Ascending aorta (tissue), 2 donors: ENCODE measurements at regions of chr7 and their contacts with region 1.

Region 1: GRCh38 chr7:2863461-2864066 is 19.5 kb upstream of the GNA12 start:
- DNase-seq: peak; percentile 76 to 95
- H3K4me3 ChIP-seq: peak overlapping the region in 1 of 2 donors; percentile 50
- H3K27ac ChIP-seq: peak overlapping the region; percentile 89 to 98
- H3K4me1 ChIP-seq: peaks cover 15 to 29% of the 10 kb centered on the region in 2 donors
- H3K27me3 ChIP-seq: no peaks in the 10 kb centered on the region
- CTCF ChIP-seq: no peak

Region 2: DNA sequence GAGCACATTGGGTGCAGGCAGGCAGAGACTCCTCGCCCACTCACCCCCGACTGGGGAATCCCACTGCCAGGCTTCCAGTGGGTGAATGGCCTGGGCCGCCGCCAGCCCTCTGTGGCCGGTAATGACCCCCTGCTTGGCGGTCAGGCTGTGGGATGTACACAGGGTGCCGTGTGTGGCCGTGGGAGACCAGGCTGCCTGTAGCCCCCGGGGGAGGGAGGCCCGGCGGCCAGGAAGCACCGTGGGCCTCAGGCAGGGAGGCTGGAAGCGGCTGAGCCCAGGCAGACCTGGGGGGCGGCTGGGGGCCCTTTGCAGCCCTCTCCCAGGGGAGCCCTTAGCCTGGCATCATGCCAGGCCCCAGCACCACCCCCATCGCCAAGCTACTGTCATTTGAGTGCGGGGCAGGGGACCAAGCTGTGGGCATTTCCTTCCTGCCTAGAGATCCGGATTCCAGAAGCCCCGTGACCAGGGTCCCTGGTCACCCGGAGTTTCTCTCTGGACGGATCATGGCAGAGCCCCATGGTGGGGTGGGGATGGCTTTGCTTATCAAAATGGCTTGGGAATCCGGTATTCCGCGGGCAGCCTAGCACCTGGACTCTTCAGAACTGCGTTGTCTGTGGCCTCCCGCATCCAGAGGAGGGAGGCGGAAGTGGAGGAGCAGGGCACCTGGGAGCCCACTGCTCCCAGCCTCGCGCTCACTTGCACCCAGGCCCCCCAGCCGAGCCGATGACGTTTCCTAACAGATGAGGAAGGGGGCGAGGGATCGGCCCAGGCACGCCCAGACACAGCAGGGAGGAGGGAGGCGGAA is 230.6 kb before region 1 on chr7:
- intact Hi-C with region 1: loop called (anchors 5 kb)
- DNase-seq: peak; percentile 54 to 84
- H3K4me3 ChIP-seq: peak overlapping the region; percentile 76 to 85
- H3K27ac ChIP-seq: peak overlapping the region; percentile 80 to 87
- H3K4me1 ChIP-seq: peaks cover 20 to 36% of the 10 kb centered on the region in 2 donors
- H3K27me3 ChIP-seq: no peaks in the 10 kb centered on the region
- CTCF ChIP-seq: no peak

Region 3: GRCh38 chr7:2688409-2689331 is 174.9 kb before region 1 on chr7:
- intact Hi-C with region 1: no loop called
- DNase-seq: no peak
- H3K4me3 ChIP-seq: peak overlapping the region; percentile 41 to 62
- H3K27ac ChIP-seq: no peak overlapping the region
- H3K4me1 ChIP-seq: peaks cover 4 to 27% of the 10 kb centered on the region in 2 donors
- H3K27me3 ChIP-seq: no peaks in the 10 kb centered on the region
- CTCF ChIP-seq: no peak

Region 4: DNA sequence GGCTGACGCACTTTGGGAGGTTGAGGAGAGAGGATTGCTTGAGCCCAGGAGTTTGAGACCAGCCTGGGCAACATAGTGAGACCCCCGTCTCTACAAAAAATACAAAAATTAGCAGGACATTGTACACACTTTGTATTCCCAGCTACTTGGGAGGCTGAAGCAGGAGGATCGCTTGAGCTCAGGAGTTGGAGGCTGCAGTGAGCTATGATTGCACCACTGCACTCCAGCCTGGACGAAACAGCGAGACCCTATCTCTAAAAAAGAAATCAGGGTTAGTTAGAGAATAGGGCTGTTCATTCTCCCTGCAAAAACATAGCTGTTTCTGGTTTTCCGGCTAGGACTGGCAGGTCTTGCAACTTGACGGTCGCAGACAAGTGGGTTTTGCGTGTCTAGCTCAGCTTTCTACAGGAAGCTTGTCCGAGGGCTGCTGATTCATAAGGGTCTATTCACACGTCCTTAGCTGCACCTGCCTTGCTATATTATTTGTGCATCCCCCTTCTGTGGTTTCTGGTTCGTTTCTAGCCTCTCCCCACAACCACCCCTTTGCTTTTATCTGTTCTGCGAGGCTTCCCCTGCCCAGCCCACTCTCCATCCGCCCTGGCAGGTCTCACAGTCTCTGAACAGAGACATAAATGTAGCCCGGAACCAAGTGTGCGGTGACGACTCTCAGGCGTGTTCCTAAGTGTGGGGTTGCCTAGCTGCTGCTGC is 164.8 kb before region 1 on chr7:
- intact Hi-C with region 1: no loop called
- DNase-seq: no peak
- H3K4me3 ChIP-seq: no peak overlapping the region
- H3K27ac ChIP-seq: no peak overlapping the region
- H3K4me1 ChIP-seq: peaks cover 0 to 3% of the 10 kb centered on the region in 2 donors
- H3K27me3 ChIP-seq: no peaks in the 10 kb centered on the region
- CTCF ChIP-seq: no peak

Region 5: DNA sequence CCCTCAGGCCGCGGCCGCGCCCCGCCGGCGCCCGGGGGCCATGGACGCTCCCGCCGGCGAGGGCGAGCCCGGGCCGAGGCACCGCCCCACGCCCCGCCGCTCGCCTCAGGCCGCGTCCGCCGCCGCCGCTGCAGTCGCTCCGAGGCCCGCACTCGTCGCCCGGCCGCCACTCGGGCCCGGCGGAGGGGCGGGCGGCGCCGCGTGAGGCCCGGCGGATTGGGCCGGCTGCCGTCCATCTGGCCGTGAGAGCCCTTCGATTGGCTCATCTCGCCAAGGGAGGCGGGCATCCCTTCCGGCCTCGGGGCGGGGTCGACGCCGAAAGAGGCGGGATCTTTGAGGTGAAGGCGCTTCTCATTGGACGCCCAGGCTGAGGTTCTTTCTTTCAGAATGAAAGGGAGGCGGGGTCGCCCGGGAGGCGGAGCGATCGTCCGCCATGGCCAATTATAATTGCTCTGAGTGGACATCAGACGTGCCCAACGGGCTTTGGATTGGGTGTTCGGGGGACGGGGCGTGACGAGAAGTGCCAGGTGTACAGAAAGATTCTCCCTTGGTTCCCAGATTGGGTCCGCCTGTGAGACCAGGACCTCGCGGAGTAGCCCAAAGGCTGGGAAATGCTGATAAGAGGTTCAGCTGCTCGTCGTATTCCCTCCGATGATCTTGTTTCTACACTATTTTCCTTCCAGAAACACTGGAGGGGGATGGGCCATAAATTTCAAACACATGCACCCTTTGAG is 19.2 kb before region 1 on chr7 and contains the start of gene GNA12:
- intact Hi-C with region 1: loop called (anchors 1 kb)
- DNase-seq: peak; percentile 97 to 100
- H3K4me3 ChIP-seq: peak within 1 kb of the TSS; percentile 90 to 94
- H3K27ac ChIP-seq: peak within 1 kb of the TSS; percentile 57 to 62
- H3K4me1 ChIP-seq: peaks cover 9 to 18% of the 10 kb centered on the region in 2 donors
- H3K27me3 ChIP-seq: no peaks in the 10 kb centered on the region
- CTCF ChIP-seq: no peak
- total RNA-seq, gene GNA12: 61.0 TPM

Region 6: DNA sequence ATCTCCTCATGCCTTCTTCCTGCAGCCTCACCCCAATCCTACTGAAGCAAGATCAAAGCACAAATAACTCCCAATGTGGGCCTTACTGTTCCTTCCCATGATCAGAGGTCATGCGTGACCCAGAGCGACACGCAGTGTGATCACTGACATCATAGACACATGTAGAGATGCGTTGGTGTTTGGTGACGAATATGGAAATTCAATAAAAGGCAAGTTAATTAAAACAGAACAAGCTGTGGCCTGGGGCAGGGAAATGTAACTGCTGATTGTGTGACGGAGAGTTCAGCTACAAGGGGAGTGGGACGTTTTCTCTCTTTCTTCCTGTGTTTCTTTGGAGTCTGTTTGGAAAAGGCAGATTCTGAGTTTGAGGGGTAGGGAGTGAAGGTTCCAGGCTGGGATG is 214.9 kb after region 1 on chr7:
- intact Hi-C with region 1: no loop called
- DNase-seq: no peak
- H3K4me3 ChIP-seq: no peak overlapping the region
- H3K27ac ChIP-seq: no peak overlapping the region
- H3K4me1 ChIP-seq: peaks cover 0 to 2% of the 10 kb centered on the region in 2 donors
- H3K27me3 ChIP-seq: no peaks in the 10 kb centered on the region
- CTCF ChIP-seq: no peak

Region 7: GRCh38 chr7:3300651-3301378 is 437.3 kb after region 1 on chr7 and contains the start of gene SDK1:
- intact Hi-C with region 1: loop called (anchors 5 kb)
- DNase-seq: peak; percentile 61 to 96
- H3K4me3 ChIP-seq: peak within 1 kb of the TSS; percentile 73 to 78
- H3K27ac ChIP-seq: peak within 1 kb of the TSS; percentile 64 to 79
- H3K4me1 ChIP-seq: peaks cover 0 to 9% of the 10 kb centered on the region in 2 donors
- H3K27me3 ChIP-seq: no peaks in the 10 kb centered on the region
- CTCF ChIP-seq: peak; percentile 68 to 99 (median 87)
- total RNA-seq, gene SDK1: 13.3 TPM

Region 8: GRCh38 chr7:4744391-4745264 is 1881.1 kb after region 1 on chr7:
- intact Hi-C with region 1: loop called (anchors 10 kb)
- DNase-seq: peak; percentile 90 to 99
- H3K4me3 ChIP-seq: peak overlapping the region; percentile 45 to 53
- H3K27ac ChIP-seq: peak overlapping the region; percentile 81 to 94
- H3K4me1 ChIP-seq: peaks cover 3 to 36% of the 10 kb centered on the region in 2 donors
- H3K27me3 ChIP-seq: no peaks in the 10 kb centered on the region
- CTCF ChIP-seq: no peak